Right ventricle myocardium superior (tissue), 1 donor: ENCODE measurements at regions of chr11 and their contacts with region 1.

Region 1: DNA sequence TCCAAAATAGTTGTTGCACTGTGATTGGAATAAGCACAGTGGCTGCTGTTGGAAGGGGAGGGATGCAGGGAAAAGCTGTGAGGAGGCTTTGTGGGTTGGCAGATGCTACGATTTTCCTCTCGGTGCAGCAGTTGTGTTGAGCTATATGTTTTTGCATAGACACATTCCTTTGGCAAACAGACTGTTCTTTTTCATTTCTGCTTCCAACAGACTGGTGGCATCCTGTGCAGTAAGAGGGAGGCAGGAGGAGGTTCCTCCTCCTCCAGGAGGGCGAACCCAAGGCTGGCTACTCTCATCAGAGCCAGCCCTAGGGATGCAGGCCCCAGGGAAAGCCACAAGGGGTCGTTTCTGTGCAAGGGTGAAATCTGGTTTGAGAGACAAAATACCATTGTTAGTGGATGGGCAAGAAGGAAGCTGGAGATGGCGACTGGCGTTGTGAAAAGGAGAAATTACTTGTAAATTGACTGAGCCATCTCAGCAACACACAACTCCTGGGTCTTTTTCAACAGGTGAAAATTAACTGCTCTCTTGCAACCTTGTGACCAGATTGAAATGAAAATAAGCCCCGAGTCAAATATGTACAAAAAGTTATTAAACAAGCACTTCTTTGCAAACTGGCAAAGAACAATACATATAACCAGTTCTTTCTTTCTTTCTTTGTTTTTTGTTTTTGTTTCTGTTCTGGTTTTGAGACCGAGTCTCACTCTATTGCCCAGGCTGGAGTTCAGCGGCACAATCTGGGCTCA is 26.5 kb upstream of the UBASH3B start:
- DNase-seq: peak; percentile 78
- ATAC-seq: peak; percentile 85

Region 2: DNA sequence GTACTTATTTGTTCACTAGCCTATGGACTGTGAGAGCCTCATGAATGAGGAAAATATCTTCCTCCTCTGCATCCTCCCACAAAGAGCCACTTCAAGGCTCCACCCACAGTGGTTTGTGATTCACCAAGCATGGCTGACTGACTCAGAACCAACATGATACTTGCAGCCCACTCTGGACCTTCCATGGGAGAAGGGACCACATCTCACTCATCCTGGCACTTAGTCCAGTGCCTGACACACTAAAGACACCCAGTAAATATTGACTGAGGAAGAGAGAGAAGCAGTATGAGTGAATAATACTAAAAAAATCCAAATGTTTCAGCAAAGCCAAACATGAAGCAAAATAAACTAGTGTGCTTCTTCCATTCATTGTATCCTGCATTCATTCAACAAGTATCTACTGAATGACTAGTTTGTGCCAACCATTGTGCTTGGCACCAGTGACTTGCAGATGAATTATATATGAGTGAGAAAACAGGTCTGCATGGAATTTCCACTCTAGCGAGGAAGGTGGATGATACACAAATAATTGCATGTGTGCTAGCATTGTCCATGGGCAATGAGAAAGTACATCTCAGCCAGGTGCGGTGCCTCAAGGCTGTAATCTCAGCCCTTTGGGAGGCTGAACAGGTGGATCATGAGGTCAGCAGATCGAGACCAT is 458.0 kb before region 1 on chr11:
- intact Hi-C with region 1: no loop called
- DNase-seq: no peak
- ATAC-seq: no peak

Region 3: DNA sequence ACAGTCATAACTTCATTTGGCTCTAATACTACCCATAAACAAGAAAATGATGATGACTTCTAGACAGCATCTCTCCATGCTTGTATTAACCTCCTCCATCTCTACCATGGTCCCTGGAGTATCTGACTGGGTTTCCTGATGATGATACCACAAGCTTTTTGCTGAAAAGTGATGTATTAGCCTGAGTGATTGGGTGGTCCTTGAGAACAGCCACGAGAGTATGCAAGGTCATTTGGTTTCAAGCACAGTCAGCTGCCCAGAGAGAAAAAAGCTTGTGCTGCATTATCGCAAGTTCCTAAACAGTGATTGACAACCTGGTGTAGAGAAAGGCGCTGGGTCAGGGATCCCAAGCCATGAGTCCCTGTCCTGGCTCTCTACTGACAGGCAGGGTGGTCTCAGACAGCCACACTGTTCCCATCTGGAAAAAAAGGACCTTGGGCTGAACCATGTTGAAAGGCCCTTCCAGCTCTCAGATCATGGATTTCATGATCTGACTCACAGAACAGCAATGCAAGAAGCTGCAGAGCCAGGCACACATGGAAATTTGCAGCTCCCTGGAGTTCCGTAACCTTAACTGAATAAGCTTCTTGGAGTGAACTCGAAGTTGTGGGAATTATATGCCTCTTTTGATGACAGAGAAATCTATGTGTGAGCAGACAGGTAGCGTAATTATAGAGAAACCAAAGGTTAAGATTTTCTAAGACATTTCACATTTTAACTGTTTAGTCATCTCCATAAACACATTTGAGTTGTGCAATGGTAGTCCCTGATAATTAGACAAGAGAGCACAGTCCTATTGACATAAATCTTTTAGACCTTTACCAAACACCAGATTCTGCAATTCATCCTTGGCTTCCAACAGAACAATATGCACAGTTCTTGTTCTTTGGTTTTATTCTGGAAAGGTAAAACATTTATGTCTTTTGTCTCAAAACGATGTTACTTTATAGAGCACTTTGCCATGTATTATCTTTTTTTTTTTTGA is 27.6 kb before region 1 on chr11:
- intact Hi-C with region 1: no loop called
- DNase-seq: no peak
- ATAC-seq: no peak

Region 4: GRCh38 chr11:122781378-122782195 is 152.6 kb after region 1 on chr11:
- intact Hi-C with region 1: loop called (anchors 5 kb)
- DNase-seq: peak; percentile 92
- ATAC-seq: peak; percentile 99